AG04450 (cell line): ENCODE measurements at regions of chr11 and their contacts with region 1.

Region 1: DNA sequence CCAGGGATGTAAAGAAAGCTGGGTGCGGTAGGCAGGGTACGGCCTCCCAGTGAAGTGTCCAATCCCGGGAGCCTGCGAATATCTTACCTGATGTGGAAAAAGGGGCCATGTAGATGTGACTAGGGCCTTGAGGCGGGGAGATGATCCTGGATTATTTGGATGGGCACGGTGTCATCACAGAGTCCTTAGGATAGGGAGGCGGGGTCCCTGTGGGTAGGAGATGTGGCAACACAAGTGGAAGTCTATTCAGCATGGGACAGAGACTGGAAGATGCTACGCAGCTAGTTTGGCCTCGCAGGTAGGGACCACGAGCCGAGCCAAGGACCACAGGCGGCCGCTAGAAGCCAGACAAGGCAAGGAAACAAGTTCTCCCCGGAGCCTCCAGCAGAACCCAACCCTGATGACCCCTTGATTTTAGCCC is 46.4 kb upstream of the SHANK2 start:
- DNase-seq: no peak
- H3K4me3 ChIP-seq: no peak overlapping the region
- H3K27ac ChIP-seq: peak overlapping the region; percentile 96
- H3K27me3 ChIP-seq: no peaks in the 10 kb centered on the region
- CTCF ChIP-seq: no peak

Region 2: DNA sequence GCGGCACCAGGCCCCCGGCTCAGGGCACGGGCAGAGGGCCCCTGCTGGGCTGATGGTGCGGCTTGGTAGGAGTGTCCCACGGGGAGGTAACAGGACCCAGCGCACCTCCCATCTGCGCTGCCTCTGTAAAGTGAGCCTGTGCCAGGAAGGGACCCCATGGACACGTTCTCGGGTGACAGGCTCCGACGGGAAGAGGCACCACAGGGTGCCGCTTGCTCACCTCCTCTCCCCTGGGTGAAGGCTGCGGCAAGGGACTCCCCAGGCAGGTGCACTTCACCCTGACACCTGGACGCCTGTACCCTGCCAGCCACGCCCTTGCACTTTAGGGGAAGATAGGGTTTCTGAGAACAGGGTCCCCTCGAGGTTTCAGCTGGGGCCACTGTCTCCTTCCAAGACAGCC is 94.5 kb before region 1 on chr11:
- CTCF ChIA-PET with region 1: no interaction called
- POLR2A ChIA-PET with region 1: no interaction called
- DNase-seq: no peak
- H3K4me3 ChIP-seq: no peak overlapping the region
- H3K27ac ChIP-seq: no peak overlapping the region
- H3K27me3 ChIP-seq: no peaks in the 10 kb centered on the region
- CTCF ChIP-seq: no peak

Region 3: DNA sequence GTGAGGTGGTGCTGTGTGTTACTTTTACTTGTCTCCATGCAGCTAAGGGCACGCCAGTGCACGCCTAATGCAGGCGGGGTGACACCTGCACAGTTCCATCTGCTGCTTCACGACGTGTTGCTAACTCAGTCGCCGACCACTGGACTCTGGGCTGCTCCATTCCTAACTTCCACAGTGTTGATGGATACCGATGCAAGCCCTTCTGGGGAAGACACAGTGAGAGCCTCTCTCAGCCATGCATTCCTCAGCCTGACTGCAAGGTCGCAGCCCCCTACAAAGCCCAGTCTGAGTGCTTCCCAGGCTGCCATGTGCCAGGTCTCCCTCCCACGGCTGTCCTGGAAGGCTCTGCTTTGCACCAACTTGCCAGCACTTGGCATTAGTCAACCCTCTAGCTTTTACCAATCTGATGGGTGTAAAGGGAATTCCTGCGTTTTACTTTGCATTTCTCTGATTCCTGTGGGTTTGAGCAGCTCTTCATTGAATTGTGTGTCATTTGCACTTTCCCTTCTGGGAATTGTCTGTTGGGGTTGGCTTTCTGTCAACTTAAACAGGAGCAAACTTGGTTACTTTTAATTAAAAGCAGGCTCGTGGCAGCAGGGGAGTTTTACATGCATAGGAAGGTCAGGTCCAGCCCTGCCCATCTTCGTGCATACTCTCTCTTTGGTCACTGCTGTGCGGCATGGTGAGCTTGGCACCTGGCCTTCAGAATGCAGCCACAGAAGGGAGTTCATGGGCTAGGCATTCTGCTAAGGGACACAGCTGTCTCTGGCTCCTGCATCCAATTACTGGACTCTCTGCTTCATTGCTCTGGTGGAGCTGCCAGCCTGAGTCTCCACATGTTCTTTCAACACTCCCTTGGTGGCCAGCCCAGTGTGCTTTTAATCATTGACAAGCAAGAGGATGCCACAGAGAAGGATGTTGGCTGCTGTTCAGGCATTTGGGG is 11.8 kb before region 1 on chr11:
- CTCF ChIA-PET with region 1: interaction called, 4 read pairs
- POLR2A ChIA-PET with region 1: interaction called, 23 read pairs
- DNase-seq: peak; percentile 76
- H3K4me3 ChIP-seq: peak overlapping the region; percentile 10
- H3K27ac ChIP-seq: peak overlapping the region; percentile 68
- H3K27me3 ChIP-seq: peaks cover 8% of the 10 kb centered on the region
- CTCF ChIP-seq: no peak

Region 4: GRCh38 chr11:71339396-71339881 is 40.7 kb after region 1 on chr11:
- CTCF ChIA-PET with region 1: no interaction called
- POLR2A ChIA-PET with region 1: interaction called, 10 read pairs
- DNase-seq: no peak
- H3K4me3 ChIP-seq: peak overlapping the region; percentile 7
- H3K27ac ChIP-seq: peak overlapping the region; percentile 52
- H3K27me3 ChIP-seq: peaks cover 10% of the 10 kb centered on the region
- CTCF ChIP-seq: no peak

Region 5: GRCh38 chr11:71551711-71552110 is 252.9 kb after region 1 on chr11:
- CTCF ChIA-PET with region 1: no interaction called
- POLR2A ChIA-PET with region 1: no interaction called
- DNase-seq: no peak
- H3K4me3 ChIP-seq: no peak overlapping the region
- H3K27ac ChIP-seq: no peak overlapping the region
- H3K27me3 ChIP-seq: no peaks in the 10 kb centered on the region
- CTCF ChIP-seq: no peak